ENCODE measurements at regions of chr3 and their contacts with region 1.

Region 1: DNA sequence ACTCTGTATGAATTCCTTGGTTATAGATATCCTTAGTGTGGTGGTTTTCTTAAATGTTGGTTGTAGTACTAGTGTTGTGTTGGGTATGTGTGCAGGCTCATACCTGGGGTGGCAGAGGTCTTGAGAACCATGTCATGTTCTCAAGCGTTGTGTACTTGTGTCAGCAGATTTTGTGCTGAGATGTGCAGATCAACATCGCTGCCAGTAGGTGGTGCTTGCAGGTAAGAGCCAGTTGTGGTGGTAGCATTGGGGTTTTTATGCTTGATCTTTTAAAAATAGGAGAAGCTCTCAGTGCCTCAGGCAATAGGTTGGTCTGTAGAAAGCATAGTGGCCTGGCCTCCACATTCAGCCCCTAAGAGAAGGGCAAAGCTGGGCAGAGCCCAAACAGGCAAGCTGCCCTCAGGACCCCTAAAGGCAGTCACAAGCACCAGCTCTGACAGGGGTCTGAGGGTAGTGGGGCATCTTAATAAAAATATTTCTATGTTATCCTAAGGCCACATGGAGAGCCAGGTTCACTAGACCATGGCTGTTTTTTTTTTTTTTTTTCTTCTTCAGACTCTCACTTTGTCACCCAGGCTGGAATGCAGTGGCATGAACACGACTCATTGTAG is 164.0 kb downstream of the IL20RB start:
- DNase-seq: peak; percentile 58
- ATAC-seq: peak; percentile 95
- H3K4me3 Mint-ChIP-seq: no peak overlapping the region
- H3K27ac Mint-ChIP-seq: no peak overlapping the region
- H3K4me1 Mint-ChIP-seq: peaks cover 2% of the 10 kb centered on the region
- H3K27me3 Mint-ChIP-seq: no peaks in the 10 kb centered on the region
- CTCF ChIP-seq: peak; percentile 65

Region 2: DNA sequence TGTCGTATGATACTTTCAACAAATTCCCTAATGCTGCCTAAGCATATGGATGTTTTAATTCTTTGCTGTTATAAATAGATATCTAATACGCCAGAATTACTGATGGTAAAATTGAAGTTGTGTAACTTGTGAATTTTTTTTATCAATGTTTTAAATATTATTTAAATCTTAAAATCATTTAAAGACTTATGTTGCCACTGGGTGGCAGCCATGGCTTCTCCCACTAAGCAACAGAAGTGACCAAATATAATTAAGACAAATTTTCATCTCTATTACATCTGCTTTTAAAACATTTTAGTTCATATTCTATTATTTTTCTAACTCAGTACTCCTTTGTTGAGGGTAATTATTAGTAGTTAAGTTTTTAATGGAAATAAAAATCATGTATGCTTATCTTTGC is 172.1 kb before region 1 on chr3:
- CTCF ChIA-PET with region 1: no interaction called
- POLR2A ChIA-PET with region 1: no interaction called
- DNase-seq: no peak
- ATAC-seq: no peak
- H3K4me3 Mint-ChIP-seq: no peak overlapping the region
- H3K27ac Mint-ChIP-seq: no peak overlapping the region
- H3K4me1 Mint-ChIP-seq: peaks cover 2% of the 10 kb centered on the region; the same call in 1 of the 2 replicates
- H3K27me3 Mint-ChIP-seq: no peaks in the 10 kb centered on the region
- CTCF ChIP-seq: no peak

Region 3: DNA sequence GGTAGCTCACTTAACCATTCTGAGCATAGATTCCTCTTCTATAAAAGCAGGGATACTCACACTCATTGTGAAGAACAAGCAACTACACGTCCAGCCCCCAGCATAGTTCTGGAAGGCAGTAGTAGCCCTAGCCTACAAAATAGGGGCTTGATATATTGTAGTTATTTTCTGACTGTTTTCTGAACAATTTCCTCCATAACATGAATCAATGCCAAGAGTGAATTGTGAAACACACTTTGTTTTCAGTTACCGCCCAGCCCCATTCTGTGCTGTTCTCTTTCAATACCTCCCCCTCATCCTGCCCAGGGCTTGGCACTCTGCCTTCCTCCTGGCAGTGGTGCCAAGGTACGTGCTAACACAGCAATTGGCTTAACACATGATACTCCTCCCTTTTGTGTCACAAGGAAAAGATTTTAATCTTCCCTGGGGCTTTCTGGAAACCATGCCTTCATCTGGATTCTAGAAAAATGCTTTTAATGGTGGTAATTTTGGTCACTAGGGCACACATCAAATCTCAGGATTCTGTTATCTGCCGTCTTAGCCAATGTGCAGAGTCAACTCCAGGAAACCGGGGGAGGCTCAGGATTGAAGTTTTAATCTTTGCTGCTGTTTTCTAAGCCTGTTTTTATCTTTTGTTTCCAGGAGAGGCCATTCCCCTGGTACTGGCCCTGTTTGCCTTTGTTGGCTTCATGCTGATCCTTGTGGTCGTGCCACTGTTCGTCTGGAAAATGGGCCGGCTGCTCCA is 126.9 kb before region 1 on chr3:
- CTCF ChIA-PET with region 1: no interaction called
- POLR2A ChIA-PET with region 1: no interaction called
- DNase-seq: no peak
- ATAC-seq: no peak
- H3K4me3 Mint-ChIP-seq: no peak overlapping the region
- H3K27ac Mint-ChIP-seq: no peak overlapping the region
- H3K4me1 Mint-ChIP-seq: no peaks in the 10 kb centered on the region
- H3K27me3 Mint-ChIP-seq: no peaks in the 10 kb centered on the region
- CTCF ChIP-seq: no peak

Region 4: DNA sequence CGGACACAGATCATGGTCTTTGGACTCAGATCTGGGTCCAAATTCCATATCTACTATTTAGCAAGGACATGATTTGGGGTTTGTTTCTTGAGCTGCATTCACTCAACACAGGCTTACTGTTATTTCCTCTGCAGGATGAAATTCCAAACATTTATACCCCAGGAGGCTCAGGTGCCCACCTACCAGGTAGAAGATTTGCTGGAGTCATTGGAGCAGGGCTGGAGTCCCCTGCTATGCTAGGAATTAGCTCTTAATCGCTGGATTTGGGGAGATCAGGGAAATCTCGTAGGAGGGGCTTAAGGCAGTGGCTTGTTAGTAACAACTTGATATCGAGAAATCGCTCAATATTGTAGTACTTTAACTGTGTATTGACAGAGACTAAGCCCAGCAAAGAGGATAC is 29.0 kb after region 1 on chr3:
- CTCF ChIA-PET with region 1: interaction called, 11 read pairs
- POLR2A ChIA-PET with region 1: interaction called, 3 read pairs
- DNase-seq: no peak
- ATAC-seq: peak; percentile 67
- H3K4me3 Mint-ChIP-seq: no peak overlapping the region
- H3K27ac Mint-ChIP-seq: no peak overlapping the region
- H3K4me1 Mint-ChIP-seq: peaks cover 28% of the 10 kb centered on the region
- H3K27me3 Mint-ChIP-seq: no peaks in the 10 kb centered on the region
- CTCF ChIP-seq: no peak

Region 5: GRCh38 chr3:137217733-137218132 is 95.9 kb after region 1 on chr3:
- CTCF ChIA-PET with region 1: interaction called, 11 read pairs
- POLR2A ChIA-PET with region 1: no interaction called
- DNase-seq: peak; percentile 67
- ATAC-seq: peak; percentile 90
- H3K4me3 Mint-ChIP-seq: no peak overlapping the region
- H3K27ac Mint-ChIP-seq: no peak overlapping the region
- H3K4me1 Mint-ChIP-seq: peaks cover 4% of the 10 kb centered on the region; the same call in 1 of the 2 replicates
- H3K27me3 Mint-ChIP-seq: no peaks in the 10 kb centered on the region; the same call in 1 of the 2 replicates
- CTCF ChIP-seq: peak; percentile 39; the same call in 1 of the 2 replicates

Measured in WTC11 (cell line).